Common myeloid progenitor, CD34-positive (primary cell): ENCODE measurements at regions of chr12 and their contacts with region 1.

Region 1: GRCh38 chr12:96359328-96359727 is 40.9 kb downstream of the CDK17 start:
- DNase-seq: peak in 2 of 3 donors; percentile 53 to 56
- H3K4me3 ChIP-seq: no peak overlapping the region
- H3K27ac ChIP-seq: no peak overlapping the region
- H3K4me1 ChIP-seq: peaks cover 2 to 33% (median 10%) of the 10 kb centered on the region in 4 experiments
- H3K27me3 ChIP-seq: no peaks in the 10 kb centered on the region

Region 2: DNA sequence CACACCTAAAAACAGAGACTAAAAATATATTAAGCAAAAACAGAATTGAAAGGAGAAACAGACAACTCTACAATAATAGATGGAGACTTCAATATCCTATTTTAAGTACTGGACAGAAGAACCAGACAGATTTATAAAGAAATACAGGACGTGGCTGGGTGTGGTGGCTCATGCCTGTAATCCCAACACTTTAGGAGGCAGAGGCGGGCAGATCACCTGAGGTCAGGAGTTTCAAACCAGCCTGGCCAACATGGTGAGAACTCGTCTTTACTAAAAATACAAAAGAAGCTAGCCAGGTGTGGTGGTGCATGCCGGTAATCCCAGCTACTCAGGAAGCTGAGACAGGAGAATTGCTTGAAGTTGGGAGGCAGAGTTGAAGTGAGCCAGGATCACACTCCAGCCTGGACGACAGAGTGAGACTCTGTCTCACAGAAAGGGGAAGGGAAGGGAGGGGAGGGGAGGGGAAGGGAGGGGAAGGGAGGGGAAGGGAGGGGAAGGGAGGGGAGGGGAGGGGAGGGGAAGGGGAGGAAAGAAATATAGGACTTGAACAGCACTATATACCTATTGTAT is 12.1 kb before region 1 on chr12:
- CTCF ChIA-PET with region 1: interaction called, 14 read pairs
- POLR2A ChIA-PET with region 1: no interaction called
- DNase-seq: peak in 1 of 3 donors; percentile 18
- H3K4me3 ChIP-seq: peak overlapping the region in 6 of 7 experiments; percentile 3 to 73 (median 42)
- H3K27ac ChIP-seq: peak overlapping the region; percentile 7 to 73
- H3K4me1 ChIP-seq: peaks cover 3 to 32% (median 21%) of the 10 kb centered on the region in 4 experiments
- H3K27me3 ChIP-seq: no peaks in the 10 kb centered on the region

Region 3: DNA sequence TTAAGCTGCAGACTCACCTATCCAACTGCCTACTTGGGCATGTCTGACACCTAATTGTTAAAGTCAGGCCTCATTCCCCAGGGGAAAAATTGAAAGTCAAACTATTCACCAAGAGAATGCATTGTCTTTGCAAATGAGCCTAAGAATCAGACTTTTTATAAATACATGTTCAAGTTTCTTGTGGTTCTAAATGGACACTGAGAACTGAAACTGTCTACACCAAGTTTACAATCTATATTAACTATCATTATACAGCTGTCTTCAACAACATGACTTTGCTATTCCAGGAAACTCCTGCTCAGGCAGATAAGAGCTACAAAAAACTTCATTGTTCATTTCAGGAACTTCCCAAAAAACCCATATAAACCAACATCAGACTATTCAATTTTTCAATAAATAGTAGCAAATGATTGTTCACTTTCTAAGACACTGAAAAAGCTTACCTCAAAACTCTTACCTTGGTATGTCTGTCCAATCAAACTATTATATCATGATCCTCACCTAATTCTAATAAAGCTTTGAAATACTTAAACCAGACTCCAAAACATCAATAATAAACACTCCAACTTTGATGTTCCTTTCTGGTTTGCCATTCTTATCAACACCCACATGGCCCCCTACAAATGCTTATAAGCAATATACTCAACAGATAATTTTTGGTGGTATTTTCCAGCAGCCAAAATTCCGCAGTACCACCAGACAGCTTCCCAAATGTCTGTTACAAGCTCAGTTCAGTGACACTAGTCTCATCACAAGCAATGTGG is 16.7 kb after region 1 on chr12:
- CTCF ChIA-PET with region 1: interaction called, 10 read pairs
- POLR2A ChIA-PET with region 1: no interaction called
- DNase-seq: peak; percentile 86 to 96 (median 92)
- H3K4me3 ChIP-seq: peak overlapping the region in 3 of 7 experiments; percentile 37 to 52 (median 46)
- H3K27ac ChIP-seq: peak overlapping the region; percentile 74 to 87
- H3K4me1 ChIP-seq: peaks cover 11 to 51% (median 29%) of the 10 kb centered on the region in 4 experiments
- H3K27me3 ChIP-seq: no peaks in the 10 kb centered on the region

Region 4: DNA sequence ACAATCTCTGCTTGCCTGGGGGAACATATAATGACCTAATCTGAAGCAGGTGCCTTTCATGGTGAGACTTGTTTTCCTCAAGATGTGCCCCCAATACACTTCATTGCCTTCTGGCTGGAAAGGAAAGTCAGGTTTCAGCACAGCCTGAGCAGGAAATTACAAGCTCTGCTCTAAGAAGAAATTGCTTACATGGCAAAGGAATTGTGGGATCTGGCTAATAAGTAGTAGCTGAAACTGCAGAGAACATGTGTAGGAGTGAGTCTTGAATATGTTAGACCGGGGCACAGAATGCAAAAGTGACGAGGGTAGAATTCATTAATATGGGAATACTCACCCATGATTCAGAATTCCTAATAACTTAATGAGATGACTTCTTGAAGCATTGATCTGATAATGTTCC is 123.8 kb after region 1 on chr12:
- CTCF ChIA-PET with region 1: no interaction called
- POLR2A ChIA-PET with region 1: no interaction called
- DNase-seq: no peak
- H3K4me3 ChIP-seq: no peak overlapping the region
- H3K27ac ChIP-seq: no peak overlapping the region
- H3K4me1 ChIP-seq: peaks cover 0 to 5% (median 4%) of the 10 kb centered on the region in 4 experiments
- H3K27me3 ChIP-seq: no peaks in the 10 kb centered on the region